Ovary (tissue), 10 donors: ENCODE measurements at regions of chr5 and their contacts with region 1.

Region 1: GRCh38 chr5:11494340-11494739 is 409.9 kb downstream of the CTNND2 start:
- DNase-seq: no peak
- H3K4me3 ChIP-seq: no peak overlapping the region
- H3K27ac ChIP-seq: no peak overlapping the region
- H3K4me1 ChIP-seq: no peaks in the 10 kb centered on the region
- H3K27me3 ChIP-seq: no peaks in the 10 kb centered on the region
- CTCF ChIP-seq: no peak
- EP300 ChIP-seq: no peak
- POLR2A ChIP-seq: no peak

Region 2: GRCh38 chr5:11273180-11273903 is 221.0 kb before region 1 on chr5:
- intact Hi-C with region 1: loop called in 3 of 4 experiments (anchors 10 kb)
- DNase-seq: no peak
- H3K4me3 ChIP-seq: no peak overlapping the region
- H3K27ac ChIP-seq: no peak overlapping the region
- H3K4me1 ChIP-seq: no peaks in the 10 kb centered on the region
- H3K27me3 ChIP-seq: no peaks in the 10 kb centered on the region
- CTCF ChIP-seq: no peak
- EP300 ChIP-seq: no peak
- POLR2A ChIP-seq: no peak